CD8-positive, alpha-beta T cell (primary cell): ENCODE measurements at regions of chr1 and their contacts with region 1.

Region 1: DNA sequence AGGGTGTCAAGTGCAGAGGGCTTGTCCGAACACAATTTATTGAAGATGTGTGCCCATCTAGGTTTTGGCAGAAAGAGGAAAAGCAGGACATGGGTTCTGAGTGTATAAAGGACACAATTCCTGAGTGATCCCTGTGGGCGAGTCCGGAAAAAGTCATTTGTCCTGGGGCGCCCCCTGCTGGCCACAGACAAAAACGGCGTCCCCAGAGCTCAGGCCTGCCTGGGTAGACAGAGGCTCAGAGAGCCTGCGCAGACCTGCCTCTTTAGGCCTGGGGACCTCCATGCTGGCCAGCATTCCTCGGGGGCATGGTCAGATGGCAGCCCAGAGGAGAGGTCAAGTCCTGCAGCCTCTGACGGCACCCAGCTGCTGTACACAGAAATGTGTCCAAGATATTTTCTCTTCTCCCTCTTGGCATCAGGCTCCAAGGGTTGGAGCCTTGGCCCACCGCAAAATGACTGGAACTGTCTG is 65.5 kb upstream of the LRP8 start:
- DNase-seq: peak; percentile 48 to 88 (median 71)
- ATAC-seq: peak; percentile 57
- H3K4me3 ChIP-seq: no peak overlapping the region
- H3K4me3 Mint-ChIP-seq: no peak overlapping the region
- H3K27ac ChIP-seq: no peak overlapping the region
- H3K27ac Mint-ChIP-seq: no peak overlapping the region
- H3K4me1 ChIP-seq: no peaks in the 10 kb centered on the region
- H3K4me1 Mint-ChIP-seq: no peaks in the 10 kb centered on the region
- H3K27me3 ChIP-seq: no peaks in the 10 kb centered on the region
- H3K27me3 Mint-ChIP-seq: no peaks in the 10 kb centered on the region
- CTCF ChIP-seq: peak; percentile 95

Region 2: DNA sequence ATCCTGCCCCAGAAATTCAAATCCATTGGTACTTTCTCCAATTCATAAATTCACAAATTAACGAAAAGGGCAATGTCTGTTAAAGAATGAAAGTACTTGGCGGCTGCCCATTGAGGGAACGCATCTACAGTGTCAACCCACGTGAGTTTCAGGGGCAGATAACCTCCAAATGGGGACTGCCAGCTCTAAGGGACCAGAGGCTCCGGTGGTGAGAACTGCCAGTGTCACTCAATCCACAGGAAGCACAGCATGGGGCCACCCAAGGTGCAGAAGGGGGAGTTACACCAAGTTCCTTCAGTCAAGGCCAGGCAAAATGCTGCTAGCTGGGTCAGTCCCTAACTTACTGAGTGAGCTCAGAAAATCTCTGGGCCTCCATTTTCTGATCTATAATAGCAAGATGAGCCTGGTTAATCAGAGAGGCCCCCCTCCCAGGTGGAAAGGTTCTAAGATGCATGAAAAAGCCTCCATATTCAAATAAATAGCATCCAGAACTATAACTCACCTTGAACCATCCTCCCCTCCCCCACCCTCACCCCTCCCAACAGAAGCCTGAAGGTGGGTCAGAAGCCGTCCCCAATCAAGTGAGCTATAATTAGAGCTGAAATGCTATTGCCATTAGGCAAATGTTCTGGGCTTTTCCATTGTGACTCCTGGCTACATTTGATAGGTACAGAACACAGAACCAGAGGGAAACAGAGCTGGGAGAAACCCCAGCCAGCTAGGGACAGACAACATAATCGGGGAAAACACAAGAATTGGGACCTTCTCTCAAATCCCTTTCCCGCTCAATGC is 107.2 kb before region 1 on chr1:
- CTCF ChIA-PET with region 1: interaction called, 458 read pairs
- POLR2A ChIA-PET with region 1: no interaction called
- intact Hi-C with region 1: no loop called
- DNase-seq: peak in 2 of 9 experiments; percentile 19 to 32
- ATAC-seq: no peak
- H3K4me3 ChIP-seq: no peak overlapping the region
- H3K4me3 Mint-ChIP-seq: no peak overlapping the region
- H3K27ac ChIP-seq: no peak overlapping the region
- H3K27ac Mint-ChIP-seq: no peak overlapping the region
- H3K4me1 ChIP-seq: no peaks in the 10 kb centered on the region
- H3K4me1 Mint-ChIP-seq: peaks cover 2% of the 10 kb centered on the region
- H3K27me3 ChIP-seq: no peaks in the 10 kb centered on the region
- H3K27me3 Mint-ChIP-seq: no peaks in the 10 kb centered on the region
- CTCF ChIP-seq: no peak

Region 3: GRCh38 chr1:53294567-53294966 is 98.8 kb before region 1 on chr1:
- CTCF ChIA-PET with region 1: interaction called, 18 read pairs
- POLR2A ChIA-PET with region 1: no interaction called
- intact Hi-C with region 1: no loop called
- DNase-seq: peak in 2 of 9 experiments; percentile 29 to 50
- ATAC-seq: peak; percentile 69
- H3K4me3 ChIP-seq: no peak overlapping the region
- H3K4me3 Mint-ChIP-seq: no peak overlapping the region
- H3K27ac ChIP-seq: peak overlapping the region in 1 of 2 experiments; percentile 22
- H3K27ac Mint-ChIP-seq: no peak overlapping the region
- H3K4me1 ChIP-seq: peaks cover 15% of the 10 kb centered on the region
- H3K4me1 Mint-ChIP-seq: peaks cover 27% of the 10 kb centered on the region
- H3K27me3 ChIP-seq: no peaks in the 10 kb centered on the region
- H3K27me3 Mint-ChIP-seq: no peaks in the 10 kb centered on the region
- CTCF ChIP-seq: no peak

Region 4: DNA sequence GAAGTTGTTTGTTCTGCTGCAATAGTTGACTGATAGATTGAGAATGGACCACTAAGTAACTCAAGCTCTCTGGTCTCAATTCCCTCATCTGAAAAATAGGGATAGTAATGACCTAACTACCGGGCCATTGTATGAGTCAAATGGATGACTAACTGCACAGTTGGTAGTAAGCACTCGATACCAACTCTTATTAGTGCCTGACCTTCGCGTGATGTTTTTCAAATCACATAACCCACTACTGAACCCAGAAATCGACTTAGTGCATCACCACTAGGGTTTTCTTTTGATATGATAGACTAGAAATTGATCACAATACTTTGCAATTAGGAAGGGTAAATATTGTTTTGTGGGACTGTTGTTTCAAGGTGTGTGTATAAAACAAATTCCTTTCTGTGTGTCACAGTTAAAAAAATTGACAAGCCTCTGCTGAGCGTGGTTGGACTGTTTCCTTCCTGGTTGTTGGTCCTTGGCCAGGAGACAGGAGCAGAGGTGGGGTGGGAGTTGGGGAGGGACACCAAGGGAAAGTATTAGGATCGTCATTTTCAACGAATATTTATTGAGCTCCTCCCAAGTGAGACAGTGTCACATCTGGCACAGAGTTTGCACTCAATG is 11.5 kb before region 1 on chr1:
- CTCF ChIA-PET with region 1: interaction called, 25 read pairs
- POLR2A ChIA-PET with region 1: no interaction called
- intact Hi-C with region 1: no loop called
- DNase-seq: no peak
- ATAC-seq: no peak
- H3K4me3 ChIP-seq: no peak overlapping the region
- H3K4me3 Mint-ChIP-seq: no peak overlapping the region
- H3K27ac ChIP-seq: no peak overlapping the region
- H3K27ac Mint-ChIP-seq: no peak overlapping the region
- H3K4me1 ChIP-seq: no peaks in the 10 kb centered on the region
- H3K4me1 Mint-ChIP-seq: peaks cover 2% of the 10 kb centered on the region
- H3K27me3 ChIP-seq: no peaks in the 10 kb centered on the region
- H3K27me3 Mint-ChIP-seq: no peaks in the 10 kb centered on the region
- CTCF ChIP-seq: no peak

Region 5: GRCh38 chr1:53413175-53414001 is 20.0 kb after region 1 on chr1:
- CTCF ChIA-PET with region 1: interaction called, 95 read pairs
- POLR2A ChIA-PET with region 1: interaction called, 3 read pairs
- intact Hi-C with region 1: no loop called
- DNase-seq: peak in 8 of 9 experiments; percentile 44 to 86 (median 70)
- ATAC-seq: peak; percentile 65
- H3K4me3 ChIP-seq: no peak overlapping the region
- H3K4me3 Mint-ChIP-seq: peak overlapping the region; percentile 59
- H3K27ac ChIP-seq: peak overlapping the region; percentile 57 to 93
- H3K27ac Mint-ChIP-seq: peak overlapping the region; percentile 97
- H3K4me1 ChIP-seq: peaks cover 38% of the 10 kb centered on the region
- H3K4me1 Mint-ChIP-seq: peaks cover 62% of the 10 kb centered on the region
- H3K27me3 ChIP-seq: no peaks in the 10 kb centered on the region
- H3K27me3 Mint-ChIP-seq: no peaks in the 10 kb centered on the region
- CTCF ChIP-seq: no peak

Region 6: GRCh38 chr1:53467391-53467790 is 74.0 kb after region 1 on chr1:
- CTCF ChIA-PET with region 1: no interaction called
- POLR2A ChIA-PET with region 1: no interaction called
- intact Hi-C with region 1: no loop called
- DNase-seq: no peak
- ATAC-seq: no peak
- H3K4me3 ChIP-seq: no peak overlapping the region
- H3K4me3 Mint-ChIP-seq: no peak overlapping the region
- H3K27ac ChIP-seq: no peak overlapping the region
- H3K27ac Mint-ChIP-seq: no peak overlapping the region
- H3K4me1 ChIP-seq: no peaks in the 10 kb centered on the region
- H3K4me1 Mint-ChIP-seq: no peaks in the 10 kb centered on the region
- H3K27me3 ChIP-seq: no peaks in the 10 kb centered on the region
- H3K27me3 Mint-ChIP-seq: no peaks in the 10 kb centered on the region
- CTCF ChIP-seq: no peak